B cell (primary cell): ENCODE measurements at regions of chr17 and their contacts with region 1.

Region 1: GRCh38 chr17:51260125-51260880 is at the start of gene UTP18:
- DNase-seq: peak; percentile 99
- ATAC-seq: peak; percentile 85
- H3K4me3 ChIP-seq: peak within 1 kb of the TSS; percentile 86 to 97 (median 92)
- H3K4me3 Mint-ChIP-seq: peak within 1 kb of the TSS; percentile 98
- H3K27ac ChIP-seq: peak within 1 kb of the TSS; percentile 96 to 98
- H3K27ac Mint-ChIP-seq: peak within 1 kb of the TSS; percentile 99
- H3K4me1 ChIP-seq: peaks cover 26 to 36% of the 10 kb centered on the region in 2 donors
- H3K4me1 Mint-ChIP-seq: peaks cover 54% of the 10 kb centered on the region
- H3K27me3 ChIP-seq: no peaks in the 10 kb centered on the region
- H3K27me3 Mint-ChIP-seq: no peaks in the 10 kb centered on the region
- CTCF ChIP-seq: no peak
- total RNA-seq, gene UTP18: 34.2 and 37.7 TPM in 2 replicates

Region 2: GRCh38 chr17:51120739-51121617 is 139.3 kb before region 1 on chr17 and contains the start of gene SPAG9:
- CTCF ChIA-PET with region 1: no interaction called
- POLR2A ChIA-PET with region 1: interaction called, 3 read pairs
- intact Hi-C with region 1: loop called (anchors 1 kb)
- DNase-seq: peak; percentile 96
- ATAC-seq: peak; percentile 84
- H3K4me3 ChIP-seq: peak within 1 kb of the TSS; percentile 74 to 98 (median 89)
- H3K4me3 Mint-ChIP-seq: peak within 1 kb of the TSS; percentile 98
- H3K27ac ChIP-seq: peak within 1 kb of the TSS; percentile 93 to 94
- H3K27ac Mint-ChIP-seq: peak within 1 kb of the TSS; percentile 99
- H3K4me1 ChIP-seq: peaks cover 33 to 35% of the 10 kb centered on the region in 2 donors
- H3K4me1 Mint-ChIP-seq: peaks cover 49% of the 10 kb centered on the region
- H3K27me3 ChIP-seq: no peaks in the 10 kb centered on the region
- H3K27me3 Mint-ChIP-seq: no peaks in the 10 kb centered on the region
- CTCF ChIP-seq: no peak
- total RNA-seq, gene SPAG9: 64.1 and 69.3 TPM in 2 replicates

Region 3: DNA sequence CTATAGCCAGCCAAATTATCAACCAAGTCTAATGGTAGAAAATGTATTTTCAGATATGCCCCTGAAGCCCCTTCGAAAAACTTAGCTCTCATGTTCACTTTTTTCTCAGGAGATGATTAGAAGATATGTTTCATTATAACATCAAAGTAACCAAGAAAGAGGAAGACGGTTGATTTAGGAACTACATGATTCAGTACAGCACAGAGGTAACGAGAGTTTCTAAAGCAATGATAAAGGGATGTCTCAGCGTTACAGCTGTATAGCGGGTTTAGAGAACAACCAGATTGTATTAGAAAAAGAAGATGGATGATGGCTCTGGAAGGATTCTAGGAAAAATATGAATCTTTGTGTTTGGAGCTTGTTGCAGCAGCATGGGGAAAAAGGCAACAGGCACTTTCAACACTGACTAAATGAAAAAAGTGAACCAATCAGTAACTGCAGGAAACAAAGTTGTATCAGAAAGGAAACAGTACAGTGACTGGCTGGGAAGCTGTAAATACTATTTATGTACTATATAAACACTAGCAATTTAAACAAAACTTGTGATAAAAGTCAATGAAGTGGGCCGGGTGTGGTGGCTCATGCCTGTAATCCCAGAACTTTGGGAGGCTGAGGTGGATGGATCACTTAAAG is 21.9 kb before region 1 on chr17:
- CTCF ChIA-PET with region 1: no interaction called
- POLR2A ChIA-PET with region 1: no interaction called
- intact Hi-C with region 1: loop called (anchors 1 kb)
- DNase-seq: peak; percentile 48
- ATAC-seq: peak; percentile 73
- H3K4me3 ChIP-seq: peak overlapping the region in 3 of 5 experiments; percentile 20 to 51 (median 47)
- H3K4me3 Mint-ChIP-seq: peak overlapping the region; percentile 80
- H3K27ac ChIP-seq: peak overlapping the region; percentile 17 to 33
- H3K27ac Mint-ChIP-seq: peak overlapping the region; percentile 78
- H3K4me1 ChIP-seq: peaks cover 12 to 15% of the 10 kb centered on the region in 2 donors
- H3K4me1 Mint-ChIP-seq: peaks cover 29% of the 10 kb centered on the region
- H3K27me3 ChIP-seq: no peaks in the 10 kb centered on the region
- H3K27me3 Mint-ChIP-seq: no peaks in the 10 kb centered on the region
- CTCF ChIP-seq: no peak

Region 4: DNA sequence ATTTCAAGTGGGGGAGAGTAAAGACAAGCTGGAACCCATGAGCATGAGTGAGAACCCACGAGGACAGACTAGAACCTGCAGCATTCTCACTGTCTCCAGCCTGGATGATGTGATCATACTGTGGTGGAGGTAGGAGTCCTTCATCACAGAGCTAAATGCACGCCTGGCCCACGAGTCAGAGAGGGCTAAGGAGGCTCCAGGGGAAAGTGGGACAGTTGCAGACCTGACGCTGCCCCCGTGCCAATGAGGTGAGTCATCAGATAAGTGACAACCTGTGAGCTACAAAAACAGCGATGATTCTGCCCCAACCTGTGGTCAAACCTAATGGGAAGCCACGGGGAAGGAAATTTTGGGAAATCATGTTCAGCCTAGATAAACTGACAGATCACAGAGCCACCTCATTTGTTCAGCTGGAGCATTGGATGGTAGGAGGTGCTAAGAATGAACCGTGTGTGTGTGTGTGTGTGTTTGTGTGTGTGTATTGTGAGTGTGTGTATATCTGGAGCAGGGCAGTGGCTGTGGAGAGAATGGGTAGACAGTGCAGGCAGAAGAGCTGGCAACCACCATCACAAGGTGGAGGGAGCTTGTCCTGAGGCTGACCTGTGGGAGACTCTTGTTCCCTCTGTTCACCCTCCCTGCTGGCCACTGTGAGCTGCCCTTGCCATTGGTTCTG is 131.8 kb after region 1 on chr17:
- CTCF ChIA-PET with region 1: no interaction called
- POLR2A ChIA-PET with region 1: no interaction called
- intact Hi-C with region 1: no loop called
- DNase-seq: no peak
- ATAC-seq: no peak
- H3K4me3 ChIP-seq: no peak overlapping the region
- H3K4me3 Mint-ChIP-seq: no peak overlapping the region
- H3K27ac ChIP-seq: no peak overlapping the region
- H3K27ac Mint-ChIP-seq: no peak overlapping the region
- H3K4me1 ChIP-seq: no peaks in the 10 kb centered on the region
- H3K4me1 Mint-ChIP-seq: no peaks in the 10 kb centered on the region
- H3K27me3 ChIP-seq: peaks cover 0 to 7% (median 3%) of the 10 kb centered on the region in 4 experiments
- H3K27me3 Mint-ChIP-seq: peaks cover 38% of the 10 kb centered on the region
- CTCF ChIP-seq: no peak